Activated CD8-positive, alpha-beta T cell treated with anti-CD3 and anti-CD28 coated beads, Interleukin-2, amount 10 ng/mL, durations not matched to agents 7 days and 5 days (primary cell): ENCODE measurements at regions of chr1 and their contacts with region 1.

Region 1: GRCh38 chr1:206658264-206658980 is 23.1 kb downstream of the DYRK3 start:
- DNase-seq: peak; percentile 71
- ATAC-seq: peak; percentile 84
- H3K4me3 Mint-ChIP-seq: no peak overlapping the region
- H3K27ac Mint-ChIP-seq: no peak overlapping the region
- H3K4me1 Mint-ChIP-seq: peaks cover 21% of the 10 kb centered on the region
- H3K27me3 Mint-ChIP-seq: peaks cover 34% of the 10 kb centered on the region

Region 2: GRCh38 chr1:206674745-206675175 is 16.3 kb after region 1 on chr1:
- CTCF ChIA-PET with region 1: interaction called, 88 read pairs
- POLR2A ChIA-PET with region 1: no interaction called
- DNase-seq: no peak
- ATAC-seq: no peak
- H3K4me3 Mint-ChIP-seq: no peak overlapping the region
- H3K27ac Mint-ChIP-seq: no peak overlapping the region
- H3K4me1 Mint-ChIP-seq: peaks cover 3% of the 10 kb centered on the region
- H3K27me3 Mint-ChIP-seq: peaks cover 4% of the 10 kb centered on the region